ENCODE measurements at regions of chr6 and their contacts with region 1.

Region 1: DNA sequence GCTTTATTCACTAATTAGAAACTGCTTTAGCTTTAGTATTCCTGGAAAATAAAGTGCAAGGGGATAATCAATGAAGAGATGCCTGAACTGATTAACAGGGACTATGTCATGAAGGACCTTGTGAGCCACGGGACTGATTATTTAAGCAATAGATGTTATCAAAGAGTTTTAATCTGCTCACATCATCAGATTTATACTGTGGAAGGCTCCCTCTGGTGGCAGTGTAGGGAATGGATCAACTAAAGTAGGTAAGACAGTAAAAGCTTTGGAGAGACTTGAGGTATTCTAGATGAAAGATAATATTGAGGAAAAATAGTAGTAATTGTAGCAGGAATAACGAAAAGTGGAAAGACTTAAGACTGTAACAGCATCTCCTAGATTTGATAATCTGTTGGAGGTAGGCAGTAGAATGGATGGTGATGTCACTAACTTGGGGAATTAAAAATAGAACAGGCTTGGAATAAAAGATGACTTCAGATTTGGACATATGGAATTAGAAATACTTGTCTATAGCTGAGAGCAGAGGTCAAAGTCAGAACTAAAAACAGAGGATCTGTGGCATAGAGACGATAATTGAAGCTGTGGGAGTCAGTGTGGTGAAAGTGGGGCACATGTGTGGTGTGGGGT is 80.3 kb upstream of the HTR1E start:
- DNase-seq: no peak
- ATAC-seq: no peak
- H3K4me3 Mint-ChIP-seq: no peak overlapping the region
- H3K27ac Mint-ChIP-seq: no peak overlapping the region
- H3K4me1 Mint-ChIP-seq: no peaks in the 10 kb centered on the region
- H3K27me3 Mint-ChIP-seq: peaks cover 4% of the 10 kb centered on the region
- CTCF ChIP-seq: peak; percentile 69

Region 2: GRCh38 chr6:85923013-85923430 is 934.0 kb before region 1 on chr6:
- CTCF ChIA-PET with region 1: interaction called, 4 read pairs
- POLR2A ChIA-PET with region 1: no interaction called
- intact Hi-C with region 1: loop called (anchors 2 kb)
- DNase-seq: no peak
- ATAC-seq: no peak
- H3K4me3 Mint-ChIP-seq: no peak overlapping the region
- H3K27ac Mint-ChIP-seq: no peak overlapping the region
- H3K4me1 Mint-ChIP-seq: no peaks in the 10 kb centered on the region
- H3K27me3 Mint-ChIP-seq: no peaks in the 10 kb centered on the region
- CTCF ChIP-seq: no peak